AG04449 (cell line): ENCODE measurements at regions of chr1 and their contacts with region 1.

Region 1: GRCh38 chr1:28437934-28438699 is 67.7 kb upstream of the RCC1 start:
- DNase-seq: peak; percentile 93
- H3K4me3 ChIP-seq: peak overlapping the region; percentile 30
- CTCF ChIP-seq: no peak

Region 2: DNA sequence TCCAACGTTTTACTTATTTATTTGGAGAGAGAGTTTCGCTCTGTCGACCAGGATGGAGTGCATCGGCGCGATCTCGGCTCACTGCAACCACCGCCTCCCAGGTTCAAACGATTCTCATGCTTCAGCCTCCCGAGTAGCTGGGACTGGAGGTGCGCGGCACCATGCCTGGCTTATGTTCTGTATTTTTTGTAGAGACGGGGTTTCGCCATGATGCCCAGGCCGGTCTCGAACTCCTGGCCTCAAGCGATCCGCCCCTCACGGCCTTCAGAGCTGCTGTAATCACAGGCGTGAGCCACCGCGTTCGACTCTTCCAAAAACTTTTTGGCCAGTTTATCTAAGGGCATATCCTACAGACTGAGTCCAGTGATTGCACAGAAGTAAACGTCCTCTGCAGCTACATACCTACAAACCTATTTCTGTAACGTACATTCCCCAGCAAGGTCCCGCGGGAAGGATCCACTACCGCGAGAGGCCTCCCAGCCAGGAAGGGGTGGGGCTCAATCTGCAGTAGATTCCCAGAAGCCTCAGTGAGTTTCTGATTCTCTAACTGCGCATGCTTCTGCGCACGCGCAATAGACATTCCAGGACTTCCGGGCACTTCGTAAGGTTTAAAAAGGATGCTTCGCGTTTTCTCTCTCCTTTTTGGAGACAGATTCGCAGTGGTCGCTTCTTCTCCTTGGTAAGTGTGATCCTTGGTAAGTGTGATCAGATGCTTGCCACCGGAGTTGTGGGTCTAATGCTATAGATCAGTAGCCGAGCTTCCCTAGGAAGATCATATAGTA is 67.5 kb after region 1 on chr1 and contains the start of gene RCC1:
- CTCF ChIA-PET with region 1: no interaction called
- POLR2A ChIA-PET with region 1: interaction called, 11 read pairs
- DNase-seq: peak; percentile 92
- H3K4me3 ChIP-seq: peak within 1 kb of the TSS; percentile 94
- CTCF ChIP-seq: no peak

Region 3: DNA sequence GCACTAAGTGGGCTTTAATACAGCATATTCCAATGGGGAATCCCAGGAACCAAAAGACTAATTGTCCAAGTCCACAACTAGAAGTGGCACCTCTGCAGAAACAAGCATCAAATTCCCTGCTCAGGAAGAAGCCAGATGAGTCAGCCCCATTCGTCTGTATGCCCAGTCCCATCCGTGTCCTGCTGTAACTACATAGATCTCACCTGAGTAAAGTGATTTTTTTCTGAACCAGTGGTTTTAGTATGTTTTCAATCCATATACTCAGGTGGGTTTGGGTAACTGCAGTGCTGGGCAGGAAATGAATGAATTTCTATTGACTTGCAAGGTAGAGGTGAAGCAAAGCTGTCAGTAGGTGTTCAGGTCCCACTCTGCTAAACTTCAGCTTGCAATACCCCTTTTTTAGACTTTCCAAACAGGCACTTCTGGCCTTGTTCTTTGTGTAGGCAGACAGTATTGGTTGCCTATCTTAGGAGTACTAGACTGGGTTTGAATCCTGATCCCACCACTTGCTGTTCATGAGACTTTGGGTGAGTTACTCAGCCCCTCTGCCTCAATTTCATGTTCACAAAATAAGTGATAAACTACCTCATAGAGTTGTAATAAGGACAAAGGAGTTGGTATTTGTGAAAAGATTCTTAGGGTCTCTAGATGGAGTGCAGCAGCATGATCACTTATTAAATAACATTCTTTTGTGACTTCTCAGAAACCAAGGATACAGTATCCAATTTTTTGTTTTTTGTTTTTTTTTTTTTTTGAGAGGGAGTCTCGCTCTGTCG is 72.7 kb after region 1 on chr1:
- CTCF ChIA-PET with region 1: no interaction called
- POLR2A ChIA-PET with region 1: interaction called, 11 read pairs
- DNase-seq: no peak
- H3K4me3 ChIP-seq: no peak overlapping the region; the same call in none of the 2 replicates
- CTCF ChIP-seq: no peak